H1 (cell line): ENCODE measurements at regions of chr21 and their contacts with region 1.

Region 1: GRCh38 chr21:37700641-37701202 is 215.5 kb downstream of the KCNJ6 start:
- DNase-seq: peak; percentile 33 to 48
- H3K4me3 ChIP-seq: no peak overlapping the region
- H3K27ac ChIP-seq: no peak overlapping the region
- H3K4me1 ChIP-seq: no peaks in the 10 kb centered on the region
- H3K27me3 ChIP-seq: 0 out of 7 replicates have a peak, but pooled peaks cover 0 to 2% (median 0%) of the 10 kb centered on the region in 4 experiments
- CTCF ChIP-seq: peak; percentile 18 to 87 (median 71)
- EP300 ChIP-seq: no peak
- POLR2A ChIP-seq: no peak
- RAD21 ChIP-seq: peak; percentile 81 to 88

Region 2: GRCh38 chr21:37560385-37560784 is 140.3 kb before region 1 on chr21:
- CTCF ChIA-PET with region 1: no interaction called
- POLR2A ChIA-PET with region 1: no interaction called
- DNase-seq: no peak
- H3K4me3 ChIP-seq: no peak overlapping the region
- H3K27ac ChIP-seq: no peak overlapping the region
- H3K4me1 ChIP-seq: peaks cover 4 to 16% (median 12%) of the 10 kb centered on the region in 4 experiments
- H3K27me3 ChIP-seq: peaks cover 0 to 7% (median 3%) of the 10 kb centered on the region in 4 experiments; a peak in 5 of 7 replicates
- CTCF ChIP-seq: no peak
- EP300 ChIP-seq: no peak
- POLR2A ChIP-seq: no peak
- RAD21 ChIP-seq: no peak

Region 3: GRCh38 chr21:37606549-37606948 is 94.2 kb before region 1 on chr21:
- CTCF ChIA-PET with region 1: no interaction called
- POLR2A ChIA-PET with region 1: no interaction called
- DNase-seq: no peak
- H3K4me3 ChIP-seq: no peak overlapping the region
- H3K27ac ChIP-seq: no peak overlapping the region
- H3K4me1 ChIP-seq: no peaks in the 10 kb centered on the region
- H3K27me3 ChIP-seq: no peaks in the 10 kb centered on the region
- CTCF ChIP-seq: no peak
- EP300 ChIP-seq: no peak
- POLR2A ChIP-seq: no peak
- RAD21 ChIP-seq: no peak

Region 4: DNA sequence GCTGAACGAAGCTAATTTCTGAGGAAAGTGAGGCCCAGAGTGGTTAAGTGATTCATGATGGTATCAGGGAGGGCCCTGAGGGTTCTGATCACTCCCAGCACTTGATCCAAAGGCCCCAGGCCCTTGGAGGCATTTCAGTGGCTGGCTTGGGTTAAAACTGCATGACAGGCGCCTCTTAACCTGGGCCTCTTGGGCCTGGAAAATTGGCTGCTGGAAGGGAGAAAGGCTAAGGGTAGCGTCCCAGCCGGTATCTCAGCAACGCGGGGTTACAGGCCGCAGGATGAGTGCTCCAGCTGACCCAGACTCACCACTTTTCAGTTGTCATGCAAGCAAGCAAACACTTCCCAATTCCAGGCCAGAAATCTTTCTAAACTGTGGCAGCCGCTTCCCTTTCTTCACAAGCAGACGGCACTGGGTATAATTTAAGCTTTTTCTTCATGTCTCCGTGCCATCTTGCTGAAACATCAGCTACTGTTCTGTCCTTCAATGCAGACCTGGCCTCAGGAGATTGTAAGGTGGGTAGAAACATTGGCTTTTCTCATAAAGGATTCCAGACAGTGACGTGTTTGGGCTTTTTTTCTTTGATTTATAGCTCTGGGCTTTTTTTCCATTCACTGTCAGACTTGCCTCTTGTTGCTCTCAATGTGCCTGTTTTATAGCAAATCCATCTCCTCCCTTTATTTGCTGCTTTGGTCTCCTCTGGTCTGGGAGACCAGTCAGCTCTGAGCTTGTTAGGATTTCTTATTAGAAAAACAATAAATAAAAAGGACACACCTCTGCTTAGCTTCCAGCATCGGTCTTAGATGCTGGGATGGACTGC is 13.5 kb before region 1 on chr21:
- CTCF ChIA-PET with region 1: interaction called, 11 read pairs
- POLR2A ChIA-PET with region 1: no interaction called
- DNase-seq: no peak
- H3K4me3 ChIP-seq: no peak overlapping the region
- H3K27ac ChIP-seq: no peak overlapping the region
- H3K4me1 ChIP-seq: peaks cover 2 to 8% (median 4%) of the 10 kb centered on the region in 4 experiments; a peak in 6 of 7 replicates
- H3K27me3 ChIP-seq: no peaks in the 10 kb centered on the region
- CTCF ChIP-seq: no peak
- EP300 ChIP-seq: no peak
- POLR2A ChIP-seq: no peak
- RAD21 ChIP-seq: no peak

Region 5: GRCh38 chr21:37711836-37712568 is 11.3 kb after region 1 on chr21:
- CTCF ChIA-PET with region 1: interaction called, 39 read pairs
- POLR2A ChIA-PET with region 1: no interaction called
- DNase-seq: peak; percentile 41 to 77
- H3K4me3 ChIP-seq: no peak overlapping the region
- H3K27ac ChIP-seq: no peak overlapping the region
- H3K4me1 ChIP-seq: peaks cover 0 to 5% (median 0%) of the 10 kb centered on the region in 4 experiments; a peak in 2 of 7 replicates
- H3K27me3 ChIP-seq: no peaks in the 10 kb centered on the region
- CTCF ChIP-seq: peak; percentile 85 to 93 (median 86)
- EP300 ChIP-seq: no peak
- POLR2A ChIP-seq: no peak
- RAD21 ChIP-seq: peak; percentile 89 to 92